GM12878 (cell line): ENCODE measurements at regions of chr7 and their contacts with region 1.

Region 1: DNA sequence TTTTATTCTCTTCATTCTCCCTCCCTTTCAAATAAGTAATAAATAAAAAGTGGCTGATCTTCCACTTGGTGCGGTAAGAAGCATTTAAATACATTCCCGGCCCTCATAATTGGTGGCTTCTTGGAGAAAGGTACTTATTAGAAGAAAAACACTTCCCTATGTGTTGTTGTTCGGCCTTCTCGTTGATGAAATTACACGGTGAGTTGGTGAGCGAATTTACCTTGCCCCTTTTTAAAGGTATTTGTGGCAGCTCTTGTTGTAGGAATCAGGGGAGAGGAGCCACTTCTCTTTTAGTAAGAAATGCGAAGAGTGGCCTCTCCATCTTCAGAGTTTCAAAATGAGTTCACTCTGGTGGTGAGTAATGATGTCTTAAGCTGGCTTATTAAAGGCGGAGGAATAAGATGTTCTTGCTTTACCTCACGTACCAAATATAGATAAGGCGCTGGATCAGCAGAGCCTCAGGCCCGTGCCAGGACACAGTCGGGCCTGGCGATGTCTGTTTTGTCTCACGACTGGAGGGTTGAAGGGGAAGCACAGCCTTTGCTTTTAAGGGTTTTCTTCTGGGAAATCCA is 135.9 kb downstream of the CUX1 start:
- DNase-seq: peak; percentile 48
- ATAC-seq: peak; percentile 82
- H3K4me3 ChIP-seq: no peak overlapping the region
- H3K27ac ChIP-seq: peak overlapping the region; percentile 33
- H3K4me1 ChIP-seq: peaks cover 46% of the 10 kb centered on the region
- H3K27me3 ChIP-seq: no peaks in the 10 kb centered on the region
- CTCF ChIP-seq: no peak
- EP300 ChIP-seq: no peak
- POLR2A ChIP-seq: no peak
- RAD21 ChIP-seq: 0 out of 2 replicates have a peak, but pooled peaks have one; percentile 6

Region 2: DNA sequence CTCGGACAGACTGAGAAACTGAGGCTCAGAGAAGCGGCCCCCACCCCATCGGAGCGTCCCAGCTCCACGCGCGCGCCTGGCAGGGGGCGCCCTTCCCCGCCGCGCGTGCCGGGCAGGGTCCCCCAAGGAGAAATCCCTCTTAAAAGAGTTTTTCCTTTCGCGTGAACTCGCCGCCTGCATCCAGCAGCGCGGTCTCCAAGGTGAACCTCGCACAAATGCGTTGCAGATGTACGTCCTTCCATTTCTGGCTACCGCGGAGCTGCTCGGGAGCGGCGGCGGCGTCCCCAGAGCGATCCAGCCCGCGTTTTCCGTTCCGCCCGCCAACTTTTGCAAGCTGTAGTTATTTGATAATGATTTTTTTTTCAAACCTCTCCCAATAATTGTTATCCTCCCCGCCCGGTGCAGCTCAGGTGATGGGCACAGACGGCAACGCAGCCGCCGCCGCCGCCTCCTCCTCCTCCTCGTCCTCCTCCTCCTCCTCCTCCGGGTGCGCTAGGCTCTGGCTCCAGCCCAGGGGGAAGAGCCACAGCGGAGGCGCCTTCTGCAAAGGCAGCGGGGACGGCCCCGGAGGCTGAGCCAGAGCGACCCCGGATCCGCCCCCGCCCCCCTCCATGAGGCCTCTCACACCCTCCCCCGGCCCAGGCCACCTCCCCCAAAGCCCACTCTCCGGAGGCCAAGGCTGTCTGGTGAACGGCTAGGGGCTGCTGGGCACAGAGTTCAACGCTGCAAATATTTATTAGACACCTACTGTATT is 209.9 kb before region 1 on chr7:
- CTCF ChIA-PET with region 1: no interaction called
- POLR2A ChIA-PET with region 1: no interaction called
- RAD21 ChIA-PET with region 1: no interaction called
- SMC1A ChIA-PET with region 1: no interaction called
- in situ Hi-C with region 1: no loop called
- intact Hi-C with region 1: loop called (anchors 10 kb)
- DNase-seq: no peak
- ATAC-seq: peak; percentile 57
- H3K4me3 ChIP-seq: peak overlapping the region; percentile 79
- H3K27ac ChIP-seq: peak overlapping the region; percentile 76
- H3K4me1 ChIP-seq: peaks cover 68% of the 10 kb centered on the region
- H3K27me3 ChIP-seq: no peaks in the 10 kb centered on the region
- CTCF ChIP-seq: peak; percentile 42 to 51 (median 49); a peak in 5 of 6 replicates
- EP300 ChIP-seq: no peak
- POLR2A ChIP-seq: no peak
- RAD21 ChIP-seq: peak; percentile 6; the same call in 1 of the 2 replicates

Region 3: GRCh38 chr7:101936611-101937231 is 16.6 kb before region 1 on chr7:
- CTCF ChIA-PET with region 1: interaction called, 4 read pairs
- POLR2A ChIA-PET with region 1: interaction called, 12 read pairs
- RAD21 ChIA-PET with region 1: interaction called, 28 read pairs
- SMC1A ChIA-PET with region 1: interaction called, 16 read pairs
- in situ Hi-C with region 1: no loop called
- intact Hi-C with region 1: no loop called
- DNase-seq: no peak
- ATAC-seq: no peak
- H3K4me3 ChIP-seq: no peak overlapping the region
- H3K27ac ChIP-seq: no peak overlapping the region
- H3K4me1 ChIP-seq: peaks cover 63% of the 10 kb centered on the region
- H3K27me3 ChIP-seq: no peaks in the 10 kb centered on the region
- CTCF ChIP-seq: no peak
- EP300 ChIP-seq: no peak
- POLR2A ChIP-seq: no peak
- RAD21 ChIP-seq: no peak

Region 4: GRCh38 chr7:101941481-101942383 is 11.6 kb before region 1 on chr7:
- CTCF ChIA-PET with region 1: interaction called, 3 read pairs
- POLR2A ChIA-PET with region 1: interaction called, 12 read pairs
- RAD21 ChIA-PET with region 1: interaction called, 28 read pairs
- SMC1A ChIA-PET with region 1: interaction called, 16 read pairs
- in situ Hi-C with region 1: no loop called
- intact Hi-C with region 1: no loop called
- DNase-seq: no peak
- ATAC-seq: peak; percentile 27
- H3K4me3 ChIP-seq: no peak overlapping the region
- H3K27ac ChIP-seq: peak overlapping the region; percentile 1; the same call in 1 of the 2 replicates
- H3K4me1 ChIP-seq: peaks cover 38% of the 10 kb centered on the region
- H3K27me3 ChIP-seq: no peaks in the 10 kb centered on the region
- CTCF ChIP-seq: no peak
- EP300 ChIP-seq: no peak
- POLR2A ChIP-seq: no peak
- RAD21 ChIP-seq: 0 out of 2 replicates have a peak, but pooled peaks have one; percentile 2

Region 5: DNA sequence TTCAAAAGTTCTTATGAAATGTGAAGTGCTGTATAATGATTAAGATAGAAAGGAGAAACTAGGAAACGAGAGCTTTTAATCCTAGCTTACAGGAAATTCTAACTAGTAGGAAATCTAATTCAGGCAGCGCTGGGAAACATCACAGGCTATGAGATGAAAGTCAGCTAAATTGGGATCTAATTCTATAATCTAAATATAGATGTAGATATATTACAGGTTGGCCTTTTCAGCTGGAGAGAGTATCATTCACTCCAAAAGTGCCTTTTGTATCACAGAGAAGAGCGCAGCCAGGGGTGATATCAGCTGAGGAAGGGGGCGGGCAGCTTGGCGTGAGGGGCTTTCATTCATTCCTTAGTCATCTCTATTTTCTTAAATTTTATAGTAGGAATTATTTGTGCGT is 21.1 kb after region 1 on chr7:
- CTCF ChIA-PET with region 1: interaction called, 7 read pairs
- POLR2A ChIA-PET with region 1: interaction called, 11 read pairs
- RAD21 ChIA-PET with region 1: interaction called, 8 read pairs
- SMC1A ChIA-PET with region 1: interaction called, 5 read pairs
- in situ Hi-C with region 1: no loop called
- intact Hi-C with region 1: no loop called
- DNase-seq: no peak
- ATAC-seq: no peak
- H3K4me3 ChIP-seq: no peak overlapping the region
- H3K27ac ChIP-seq: no peak overlapping the region
- H3K4me1 ChIP-seq: peaks cover 11% of the 10 kb centered on the region; the same call in 1 of the 2 replicates
- H3K27me3 ChIP-seq: no peaks in the 10 kb centered on the region
- CTCF ChIP-seq: no peak
- EP300 ChIP-seq: no peak
- POLR2A ChIP-seq: no peak
- RAD21 ChIP-seq: no peak